Tibial artery (tissue), 4 donors: ENCODE measurements at regions of chr14 and their contacts with region 1.

Region 1: DNA sequence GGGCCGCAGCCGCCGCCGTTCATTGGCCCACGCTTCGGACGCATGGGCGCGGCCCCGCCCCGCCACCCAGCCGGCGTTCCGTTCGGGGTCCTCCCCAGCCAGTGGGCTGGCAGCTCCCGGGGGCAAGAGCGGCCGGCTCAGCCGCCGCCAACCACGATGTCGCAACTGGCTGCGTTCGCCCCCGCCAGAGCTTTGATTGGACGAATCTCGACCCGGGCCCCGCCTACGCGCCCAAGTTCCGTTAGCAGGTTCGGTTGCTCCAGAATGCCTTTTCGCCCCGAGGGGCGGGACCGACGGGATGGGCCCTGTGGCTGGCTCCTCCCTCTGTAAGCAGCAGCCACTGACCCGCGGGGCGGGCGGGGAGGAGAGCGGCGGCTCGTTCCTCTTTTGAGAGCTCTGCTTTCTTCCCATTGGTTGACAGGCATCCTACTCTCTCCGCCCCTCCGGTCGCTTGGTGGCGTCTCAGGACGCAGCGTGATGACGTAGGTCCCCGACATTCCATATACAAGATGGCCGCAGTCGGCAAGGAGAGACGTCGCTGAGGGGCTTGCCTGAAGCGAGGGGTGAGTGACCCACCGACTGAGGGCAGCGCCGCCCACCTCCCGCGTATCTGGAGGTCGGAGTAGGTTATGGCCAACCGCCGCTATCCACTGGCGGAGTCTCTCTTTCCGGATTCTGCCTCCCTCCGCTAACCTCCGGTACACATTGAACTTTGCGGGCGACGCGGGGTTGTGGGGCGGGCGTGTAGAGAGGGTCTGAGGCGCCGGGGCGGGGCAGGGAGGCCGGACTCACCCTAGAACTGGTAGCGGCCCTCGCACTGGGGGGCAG is at the start of gene CCNK:
- DNase-seq: peak; percentile 100
- H3K4me3 ChIP-seq: peak within 1 kb of the TSS; percentile 73 to 97
- H3K27ac ChIP-seq: peak within 1 kb of the TSS; percentile 94
- H3K4me1 ChIP-seq: peaks cover 0 to 41% (median 30%) of the 10 kb centered on the region in 4 donors
- H3K27me3 ChIP-seq: no peaks in the 10 kb centered on the region
- CTCF ChIP-seq: no peak

Region 2: DNA sequence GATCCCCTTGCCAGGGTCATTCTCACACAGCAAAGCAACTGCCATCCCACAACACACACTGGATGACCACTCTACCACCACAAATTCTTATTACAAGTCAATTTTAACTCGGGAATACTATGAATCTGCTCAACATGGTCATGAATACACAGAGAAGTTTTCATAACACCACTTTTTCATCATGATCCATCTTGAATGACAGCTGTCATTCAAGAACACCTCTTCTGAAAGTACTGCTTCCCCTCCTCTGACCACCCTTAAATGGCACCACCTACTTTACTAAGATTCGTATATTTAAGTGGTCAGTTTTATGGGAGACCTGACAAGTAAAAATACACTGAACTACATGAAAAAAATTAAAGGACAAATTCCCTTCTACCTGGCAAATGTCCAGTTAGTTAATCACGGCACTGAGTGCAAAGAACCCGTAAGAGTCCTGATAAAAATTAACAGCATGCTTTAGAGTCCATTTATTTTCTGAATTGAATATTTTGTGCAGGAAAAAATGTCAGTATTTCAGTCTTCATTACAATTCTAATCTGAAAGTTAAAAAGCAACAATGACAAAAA is 49.2 kb before region 1 on chr14:
- intact Hi-C with region 1: loop called (anchors 1 kb)
- DNase-seq: no peak
- H3K4me3 ChIP-seq: no peak overlapping the region
- H3K27ac ChIP-seq: no peak overlapping the region
- H3K4me1 ChIP-seq: peaks cover 0 to 15% (median 5%) of the 10 kb centered on the region in 4 donors
- H3K27me3 ChIP-seq: no peaks in the 10 kb centered on the region
- CTCF ChIP-seq: no peak

Region 3: DNA sequence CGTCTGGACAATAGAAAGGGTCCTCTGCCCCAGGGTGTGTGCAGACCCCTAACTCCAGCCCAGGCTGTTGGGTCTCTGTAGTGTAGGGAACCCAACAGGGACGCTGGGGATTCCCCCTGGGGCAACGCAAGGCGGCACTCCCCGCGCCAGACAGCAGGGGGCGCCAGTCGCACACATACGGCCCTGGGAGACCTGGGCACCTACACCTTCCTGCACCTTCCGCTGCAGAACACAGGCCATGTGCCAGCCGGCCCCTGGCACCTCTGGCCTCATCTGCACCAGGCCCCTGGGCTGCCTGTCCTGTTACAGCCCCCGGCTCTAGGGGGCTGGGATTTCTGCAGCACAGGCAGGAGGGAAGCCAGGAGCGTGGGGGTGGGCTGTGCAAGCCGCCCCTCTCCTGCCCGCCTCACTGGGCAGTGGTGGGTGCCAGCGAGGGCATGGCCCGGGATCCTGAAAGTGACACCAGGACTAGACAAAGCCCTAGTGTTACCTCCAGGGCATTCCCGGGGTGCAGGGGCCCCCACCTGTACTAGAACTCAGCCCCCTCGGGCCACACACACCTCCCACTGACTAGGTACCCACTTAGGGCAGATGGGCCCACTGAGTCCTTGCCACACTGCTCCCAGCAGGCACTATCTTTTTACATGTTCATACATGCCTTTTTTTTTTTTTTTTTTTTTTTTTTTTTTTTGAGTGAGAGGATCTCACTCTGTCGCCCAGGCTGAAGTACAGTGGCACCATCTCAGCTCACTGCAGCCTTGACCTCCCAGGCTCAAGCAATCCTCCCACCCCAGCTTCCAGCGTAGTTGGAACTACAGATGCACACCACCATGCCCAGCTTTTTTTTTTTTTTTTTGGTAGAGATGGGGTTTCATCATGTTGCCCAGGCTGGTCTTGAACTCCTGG is 37.6 kb after region 1 on chr14:
- intact Hi-C with region 1: no loop called
- DNase-seq: peak; percentile 40 to 76
- H3K4me3 ChIP-seq: no peak overlapping the region
- H3K27ac ChIP-seq: no peak overlapping the region
- H3K4me1 ChIP-seq: peaks cover 0 to 21% (median 0%) of the 10 kb centered on the region in 4 donors
- H3K27me3 ChIP-seq: no peaks in the 10 kb centered on the region
- CTCF ChIP-seq: peak; percentile 87 to 92

Region 4: DNA sequence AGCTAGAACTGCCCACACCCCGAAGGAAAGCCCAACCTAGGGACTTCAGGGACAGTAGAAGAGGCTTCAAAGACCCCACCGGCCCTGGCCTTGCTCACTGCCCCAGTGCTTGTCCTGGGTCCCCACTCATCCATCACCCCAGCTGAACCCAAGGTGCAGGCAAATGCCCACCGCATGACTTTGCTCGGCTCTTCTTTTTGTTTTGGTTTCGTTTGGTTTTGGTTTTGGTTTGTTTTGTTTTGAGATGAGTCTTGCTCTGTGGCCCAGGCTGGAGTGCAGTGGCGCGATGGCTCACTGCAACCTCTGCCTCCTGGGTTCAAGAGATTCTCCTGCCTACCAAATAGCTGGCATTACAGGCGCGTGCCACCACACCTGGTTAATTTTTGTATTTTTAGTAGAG is 113.9 kb after region 1 on chr14:
- intact Hi-C with region 1: loop called (anchors 5 kb)
- DNase-seq: no peak
- H3K4me3 ChIP-seq: no peak overlapping the region
- H3K27ac ChIP-seq: no peak overlapping the region
- H3K4me1 ChIP-seq: peaks cover 0 to 29% (median 5%) of the 10 kb centered on the region in 4 donors
- H3K27me3 ChIP-seq: no peaks in the 10 kb centered on the region
- CTCF ChIP-seq: no peak